H1 (cell line): ENCODE measurements at regions of chr12 and their contacts with region 1.

Region 1: GRCh38 chr12:82527165-82527780 is 159.4 kb upstream of the TMTC2 start:
- DNase-seq: no peak
- H3K4me3 ChIP-seq: no peak overlapping the region
- H3K27ac ChIP-seq: no peak overlapping the region
- H3K4me1 ChIP-seq: no peaks in the 10 kb centered on the region
- H3K27me3 ChIP-seq: no peaks in the 10 kb centered on the region
- CTCF ChIP-seq: peak in 2 of 3 experiments; percentile 58 to 76; a peak in 3 of 4 replicates
- EP300 ChIP-seq: no peak
- POLR2A ChIP-seq: no peak
- RAD21 ChIP-seq: peak; percentile 82 to 85

Region 2: GRCh38 chr12:82517027-82517426 is 10.2 kb before region 1 on chr12:
- CTCF ChIA-PET with region 1: interaction called, 27 read pairs
- POLR2A ChIA-PET with region 1: no interaction called
- DNase-seq: no peak
- H3K4me3 ChIP-seq: no peak overlapping the region
- H3K27ac ChIP-seq: no peak overlapping the region
- H3K4me1 ChIP-seq: no peaks in the 10 kb centered on the region
- H3K27me3 ChIP-seq: no peaks in the 10 kb centered on the region
- CTCF ChIP-seq: peak; percentile 44 to 88 (median 64)
- EP300 ChIP-seq: no peak
- POLR2A ChIP-seq: no peak
- RAD21 ChIP-seq: peak; percentile 44 to 62

Region 3: GRCh38 chr12:82660541-82661325 is 133.5 kb after region 1 on chr12:
- CTCF ChIA-PET with region 1: no interaction called
- POLR2A ChIA-PET with region 1: no interaction called
- DNase-seq: no peak
- H3K4me3 ChIP-seq: no peak overlapping the region
- H3K27ac ChIP-seq: no peak overlapping the region
- H3K4me1 ChIP-seq: peaks cover 0 to 7% (median 5%) of the 10 kb centered on the region in 4 experiments; a peak in 3 of 7 replicates
- H3K27me3 ChIP-seq: no peaks in the 10 kb centered on the region
- CTCF ChIP-seq: no peak
- EP300 ChIP-seq: no peak
- POLR2A ChIP-seq: no peak
- RAD21 ChIP-seq: no peak